ENCODE measurements at regions of chr19 and their contacts with region 1.

Region 1: DNA sequence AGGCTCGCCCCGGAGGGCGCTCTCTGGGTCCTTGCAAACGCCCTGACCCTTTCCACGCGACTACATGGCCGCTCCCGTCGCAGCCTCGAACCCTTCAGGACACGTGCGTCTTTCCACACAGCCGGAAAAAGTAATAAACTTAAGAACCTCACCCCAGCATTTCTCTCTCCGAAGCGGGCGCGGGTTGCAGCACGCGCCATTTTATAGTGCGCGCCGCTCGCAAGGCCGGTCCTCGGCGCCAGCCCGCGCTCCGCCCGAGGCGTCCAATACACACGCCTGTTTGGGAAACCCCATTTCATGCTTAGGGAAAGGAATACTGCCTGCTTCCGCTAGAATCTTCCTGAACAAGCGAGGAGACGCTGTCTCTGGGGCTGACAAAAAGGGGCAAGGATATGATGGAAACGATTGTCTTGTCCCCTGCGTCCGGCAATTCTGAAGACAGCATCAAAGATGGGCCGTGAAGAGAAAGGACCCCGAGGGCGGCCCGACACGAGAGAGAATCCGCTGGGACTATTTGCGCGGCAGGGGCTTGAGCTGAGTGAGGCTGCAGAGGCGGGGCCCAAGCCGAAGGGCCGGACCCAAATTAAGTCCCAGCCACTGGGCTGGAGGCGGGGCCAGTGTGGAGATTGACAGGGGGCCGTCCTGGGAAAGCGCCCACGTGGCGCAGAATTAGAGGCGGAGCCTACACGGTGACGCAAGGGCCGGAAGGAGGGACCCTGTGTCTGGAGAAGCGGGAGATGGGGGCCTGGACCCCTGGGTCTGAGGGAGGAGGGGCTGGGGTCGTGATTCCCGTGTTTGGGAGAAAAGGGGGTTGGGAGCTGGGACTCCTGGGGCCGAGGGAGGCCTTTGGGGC is 14.4 kb downstream of the ACP4 start:
- DNase-seq: peak; percentile 95 to 99 (median 97)
- ATAC-seq: peak; percentile 96
- H3K4me3 ChIP-seq: peak overlapping the region; percentile 99
- H3K27ac ChIP-seq: peak overlapping the region; percentile 100
- H3K4me1 ChIP-seq: peaks cover 14 to 24% of the 10 kb centered on the region in 2 experiments; a peak in 4 of 5 replicates
- H3K27me3 ChIP-seq: no peaks in the 10 kb centered on the region
- CTCF ChIP-seq: peak in 1 of 3 experiments; percentile 4; a peak in 1 of 6 replicates
- EP300 ChIP-seq: peak; percentile 21; the same call in 1 of the 2 replicates
- POLR2A ChIP-seq: peak; percentile 99
- RAD21 ChIP-seq: 0 out of 4 replicates have a peak, but pooled peaks of 1 of the 2 experiments have one; percentile 6

Region 2: DNA sequence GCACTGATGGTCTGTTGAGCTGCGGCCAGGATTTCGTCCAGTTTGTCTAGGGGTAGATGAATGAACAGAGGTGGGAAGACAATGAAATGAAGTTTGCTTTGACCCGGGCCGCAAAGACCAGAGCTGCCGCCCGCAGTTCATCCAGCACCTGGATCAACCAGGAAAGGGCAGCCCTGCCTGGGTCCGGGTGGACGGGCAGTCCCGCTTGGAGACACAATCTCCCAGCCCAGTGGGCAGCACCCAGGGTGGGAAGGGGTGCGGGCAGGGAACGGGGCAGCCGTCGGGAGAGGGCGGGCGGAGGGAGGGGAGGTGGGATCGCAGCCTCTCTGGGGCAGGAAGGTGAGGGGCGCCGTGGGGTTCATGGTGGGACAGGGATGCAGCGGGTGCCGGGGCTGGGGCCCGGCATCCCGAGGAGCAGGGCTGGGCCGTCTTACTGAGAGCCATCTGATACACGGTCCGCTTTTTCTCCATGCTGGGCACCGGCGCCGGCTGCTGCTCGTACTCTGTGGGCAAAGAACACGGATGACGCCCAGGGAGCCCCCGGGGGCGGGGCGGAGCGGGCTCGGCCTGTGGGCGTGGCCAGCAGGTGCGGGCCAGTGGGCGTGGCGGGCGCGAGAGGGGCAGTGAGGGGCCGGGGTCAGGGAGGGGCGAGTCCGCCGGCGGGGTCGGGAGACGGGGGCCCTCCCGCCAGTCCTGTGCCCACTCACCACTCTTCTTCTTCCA is 118.2 kb before region 1 on chr19:
- CTCF ChIA-PET with region 1: no interaction called
- POLR2A ChIA-PET with region 1: no interaction called
- in situ Hi-C with region 1: no loop called
- intact Hi-C with region 1: no loop called
- DNase-seq: peak in 2 of 4 experiments; percentile 79 to 81
- ATAC-seq: no peak
- H3K4me3 ChIP-seq: no peak overlapping the region
- H3K27ac ChIP-seq: no peak overlapping the region
- H3K4me1 ChIP-seq: peaks cover 0 to 13% of the 10 kb centered on the region in 2 experiments; a peak in 2 of 5 replicates
- H3K27me3 ChIP-seq: peaks cover 27 to 57% of the 10 kb centered on the region in 2 experiments
- CTCF ChIP-seq: no peak
- EP300 ChIP-seq: no peak
- POLR2A ChIP-seq: no peak
- RAD21 ChIP-seq: no peak

Region 3: GRCh38 chr19:50705422-50706019 is 99.1 kb before region 1 on chr19:
- CTCF ChIA-PET with region 1: no interaction called
- POLR2A ChIA-PET with region 1: no interaction called
- in situ Hi-C with region 1: no loop called
- intact Hi-C with region 1: no loop called
- DNase-seq: peak; percentile 81 to 84 (median 82)
- ATAC-seq: peak; percentile 92
- H3K4me3 ChIP-seq: no peak overlapping the region
- H3K27ac ChIP-seq: no peak overlapping the region
- H3K4me1 ChIP-seq: peaks cover 0 to 19% of the 10 kb centered on the region in 2 experiments; a peak in 2 of 5 replicates
- H3K27me3 ChIP-seq: peaks cover 20 to 37% of the 10 kb centered on the region in 2 experiments; a peak in 4 of 5 replicates
- CTCF ChIP-seq: peak; percentile 85 to 93 (median 88)
- EP300 ChIP-seq: no peak
- POLR2A ChIP-seq: no peak
- RAD21 ChIP-seq: peak; percentile 85 to 93

Region 4: DNA sequence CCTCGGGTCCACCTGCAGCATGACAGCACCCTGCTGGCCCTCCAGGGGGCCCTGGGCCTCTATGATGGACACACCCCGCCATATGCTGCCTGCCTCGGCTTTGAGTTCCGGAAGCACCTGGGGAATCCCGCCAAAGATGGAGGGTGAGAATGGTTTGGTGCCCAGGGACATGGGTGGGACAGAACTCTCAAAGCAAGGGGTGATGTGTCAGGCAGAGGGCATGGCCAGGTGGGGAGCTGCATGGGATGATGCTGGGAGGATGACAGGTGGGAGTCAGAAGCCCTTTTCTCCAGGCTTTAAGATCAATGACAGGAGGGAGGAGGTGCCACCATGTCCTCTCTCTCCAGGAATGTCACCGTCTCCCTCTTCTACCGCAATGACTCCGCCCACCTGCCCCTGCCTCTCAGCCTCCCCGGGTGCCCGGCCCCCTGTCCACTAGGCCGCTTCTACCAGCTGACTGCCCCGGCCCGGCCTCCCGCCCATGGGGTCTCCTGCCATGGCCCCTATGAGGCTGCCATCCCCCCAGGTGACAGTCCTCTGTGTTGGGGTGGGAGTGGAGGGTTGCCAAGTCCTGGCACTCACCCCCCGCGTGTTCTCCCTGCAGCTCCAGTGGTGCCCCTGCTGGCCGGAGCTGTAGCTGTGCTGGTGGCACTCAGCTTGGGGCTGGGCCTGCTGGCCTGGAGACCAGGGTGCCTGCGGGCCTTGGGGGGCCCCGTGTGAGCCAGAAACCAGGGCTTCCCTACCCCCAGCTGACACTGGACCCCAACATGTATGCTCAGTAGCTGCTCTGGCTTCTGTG is 10.0 kb before region 1 on chr19:
- CTCF ChIA-PET with region 1: no interaction called
- POLR2A ChIA-PET with region 1: interaction called, 58 read pairs
- in situ Hi-C with region 1: no loop called
- intact Hi-C with region 1: no loop called
- DNase-seq: peak; percentile 77 to 84 (median 79)
- ATAC-seq: peak; percentile 69
- H3K4me3 ChIP-seq: no peak overlapping the region
- H3K27ac ChIP-seq: no peak overlapping the region
- H3K4me1 ChIP-seq: peaks cover 7 to 66% of the 10 kb centered on the region in 2 experiments; a peak in 4 of 5 replicates
- H3K27me3 ChIP-seq: no peaks in the 10 kb centered on the region
- CTCF ChIP-seq: peak; percentile 61 to 70 (median 65)
- EP300 ChIP-seq: no peak
- POLR2A ChIP-seq: no peak; the same call in 1 of the 2 replicates
- RAD21 ChIP-seq: peak; percentile 53 to 79

Region 5: GRCh38 chr19:50830266-50831025 is 25.8 kb after region 1 on chr19:
- CTCF ChIA-PET with region 1: interaction called, 5 read pairs
- POLR2A ChIA-PET with region 1: interaction called, 70 read pairs
- in situ Hi-C with region 1: no loop called
- intact Hi-C with region 1: loop called (anchors 5 kb)
- DNase-seq: no peak
- ATAC-seq: no peak
- H3K4me3 ChIP-seq: no peak overlapping the region
- H3K27ac ChIP-seq: no peak overlapping the region
- H3K4me1 ChIP-seq: peaks cover 9 to 14% of the 10 kb centered on the region in 2 experiments; a peak in 4 of 5 replicates
- H3K27me3 ChIP-seq: peaks cover 0 to 20% of the 10 kb centered on the region in 2 experiments; a peak in 3 of 5 replicates
- CTCF ChIP-seq: no peak
- EP300 ChIP-seq: no peak
- POLR2A ChIP-seq: no peak
- RAD21 ChIP-seq: no peak

Region 6: GRCh38 chr19:50875795-50876422 is 71.3 kb after region 1 on chr19:
- CTCF ChIA-PET with region 1: no interaction called
- POLR2A ChIA-PET with region 1: interaction called, 12 read pairs
- in situ Hi-C with region 1: no loop called
- intact Hi-C with region 1: no loop called
- DNase-seq: no peak
- ATAC-seq: no peak
- H3K4me3 ChIP-seq: no peak overlapping the region
- H3K27ac ChIP-seq: no peak overlapping the region
- H3K4me1 ChIP-seq: peaks cover 15 to 18% of the 10 kb centered on the region in 2 experiments
- H3K27me3 ChIP-seq: peaks cover 15 to 56% of the 10 kb centered on the region in 2 experiments; a peak in 4 of 5 replicates
- CTCF ChIP-seq: no peak
- EP300 ChIP-seq: no peak
- POLR2A ChIP-seq: no peak
- RAD21 ChIP-seq: no peak

Measured in K562 (cell line).